ENCODE measurements at regions of chrX and their contacts with region 1.

Region 1: GRCh38 chrX:75603833-75604232 is 81.0 kb upstream of the ZDHHC15 start:
- DNase-seq: no peak
- H3K4me3 ChIP-seq: no peak overlapping the region
- H3K27ac ChIP-seq: no peak overlapping the region
- H3K4me1 ChIP-seq: no peaks in the 10 kb centered on the region
- H3K27me3 ChIP-seq: no peaks in the 10 kb centered on the region
- CTCF ChIP-seq: peak; percentile 44 to 71 (median 58)
- POLR2A ChIP-seq: no peak

Region 2: DNA sequence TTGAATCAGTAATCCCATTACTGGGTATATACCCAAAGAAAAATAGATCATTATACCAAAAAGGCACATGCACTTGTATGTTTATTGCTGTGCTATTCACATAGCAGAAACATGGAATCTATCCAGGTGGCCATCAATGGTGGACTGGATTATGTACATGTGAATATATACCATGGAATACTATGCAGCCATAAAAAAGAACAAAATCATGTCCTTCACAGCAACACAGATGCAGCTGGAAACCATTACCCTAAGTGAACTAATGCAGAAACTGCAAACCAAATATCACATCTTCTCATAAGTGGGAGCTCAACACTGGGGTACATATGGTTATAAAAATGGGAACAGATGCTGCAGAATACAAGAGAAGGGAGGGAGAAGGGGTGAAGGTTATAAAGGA is 558.5 kb before region 1 on chrX:
- intact Hi-C with region 1: loop called in 1 of 2 experiments (anchors 10 kb)
- DNase-seq: no peak
- H3K4me3 ChIP-seq: no peak overlapping the region
- H3K27ac ChIP-seq: no peak overlapping the region
- H3K4me1 ChIP-seq: no peaks in the 10 kb centered on the region
- H3K27me3 ChIP-seq: peaks cover 6% of the 10 kb centered on the region
- CTCF ChIP-seq: no peak
- POLR2A ChIP-seq: no peak

Region 3: DNA sequence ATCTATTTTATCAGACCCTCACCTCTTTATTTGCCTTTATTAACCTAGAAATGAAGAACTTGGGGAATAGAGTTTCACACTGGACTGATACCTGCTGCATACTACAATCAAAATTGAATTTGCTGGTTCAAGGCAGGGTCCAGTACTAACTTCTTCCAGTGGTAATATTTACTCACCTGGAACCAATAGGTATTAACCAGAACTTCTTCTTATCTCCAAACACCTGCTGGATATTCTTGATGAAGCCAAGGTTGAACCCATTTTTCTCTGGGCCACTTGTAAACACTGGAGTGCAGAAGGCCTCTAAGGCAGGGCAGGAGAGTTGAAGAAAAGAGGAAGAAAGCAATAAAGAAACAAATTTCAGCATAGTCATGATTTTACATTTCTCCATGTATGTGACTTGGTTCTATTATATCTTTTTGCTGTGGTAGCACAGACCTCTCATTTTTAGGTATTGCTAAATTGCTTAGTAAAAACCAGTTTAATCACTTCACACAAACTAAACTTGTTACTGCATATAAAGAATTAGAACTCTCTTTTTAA is 182.1 kb before region 1 on chrX:
- intact Hi-C with region 1: no loop called
- DNase-seq: no peak
- H3K4me3 ChIP-seq: no peak overlapping the region
- H3K27ac ChIP-seq: no peak overlapping the region
- H3K4me1 ChIP-seq: no peaks in the 10 kb centered on the region
- H3K27me3 ChIP-seq: no peaks in the 10 kb centered on the region
- CTCF ChIP-seq: no peak
- POLR2A ChIP-seq: no peak

Measured in adrenal gland (tissue), 19 donors.